Heart right ventricle (tissue), 16 donors: ENCODE measurements at regions of chr9 and their contacts with region 1.

Region 1: DNA sequence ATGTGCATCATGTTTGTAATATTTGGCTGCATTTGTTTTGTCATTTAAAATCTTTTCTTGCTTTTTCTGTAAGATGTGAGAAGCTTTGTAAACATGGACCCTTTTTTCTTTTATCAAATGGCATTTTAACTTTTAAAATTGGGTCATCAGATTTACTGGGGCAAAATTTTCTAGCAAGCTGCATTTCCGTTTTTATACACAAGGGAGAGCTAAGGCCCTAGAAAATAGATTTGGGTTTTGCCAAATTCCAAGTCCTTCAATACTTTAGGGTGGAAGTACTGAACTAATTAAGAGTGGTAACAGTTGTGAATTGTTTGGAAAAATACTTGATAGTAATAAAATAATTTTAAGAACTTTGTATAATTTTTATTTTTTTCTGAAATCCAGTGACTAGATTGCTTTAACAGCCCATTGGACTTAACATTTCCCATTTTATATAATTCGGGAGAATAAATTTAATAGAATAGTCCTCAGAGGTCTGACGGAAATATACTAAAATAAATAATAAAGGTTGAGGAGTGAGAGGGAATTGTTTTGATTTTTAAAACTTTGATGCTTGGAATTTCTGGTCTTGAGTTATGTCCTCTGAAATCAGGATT is 117.4 kb downstream of the SMARCA2 start:
- DNase-seq: no peak
- ATAC-seq: peak in 2 of 8 donors; percentile 26 to 37
- H3K4me3 ChIP-seq: no peak overlapping the region
- H3K27ac ChIP-seq: peak overlapping the region in 3 of 10 donors; percentile 0 to 6 (median 4)
- H3K4me1 ChIP-seq: peaks cover 5 to 63% (median 40%) of the 10 kb centered on the region in 9 donors
- H3K27me3 ChIP-seq: no peaks in the 10 kb centered on the region
- CTCF ChIP-seq: peak; percentile 61 to 86 (median 74)

Region 2: GRCh38 chr9:2181792-2182191 is 49.2 kb after region 1 on chr9:
- intact Hi-C with region 1: loop called in 3 of 10 experiments (anchors 2 to 5 kb)
- DNase-seq: no peak
- ATAC-seq: peak in 2 of 8 donors; percentile 58 to 70
- H3K4me3 ChIP-seq: no peak overlapping the region
- H3K27ac ChIP-seq: no peak overlapping the region
- H3K4me1 ChIP-seq: peaks cover 0 to 11% (median 4%) of the 10 kb centered on the region in 9 donors
- H3K27me3 ChIP-seq: no peaks in the 10 kb centered on the region
- CTCF ChIP-seq: peak in 8 of 9 donors; percentile 10 to 61 (median 50)

Region 3: DNA sequence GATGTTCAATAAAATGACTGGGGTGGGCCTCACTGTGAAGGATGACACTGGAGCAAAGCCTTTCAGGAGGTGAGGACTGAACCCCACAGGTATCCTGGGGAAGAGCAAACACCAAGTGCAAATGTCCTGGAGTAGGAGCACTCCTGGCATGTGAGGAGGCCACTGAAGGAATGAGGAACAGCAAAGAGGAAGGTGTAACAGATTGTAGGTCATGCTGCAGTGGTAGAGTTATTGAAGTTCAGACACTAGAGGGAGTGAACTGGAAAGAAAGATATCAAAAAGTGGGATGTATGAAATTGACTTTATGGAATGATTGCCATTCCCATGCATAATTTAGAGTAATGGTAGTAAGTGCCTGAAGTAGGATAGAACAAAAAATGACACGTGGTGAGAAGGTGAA is 606.5 kb after region 1 on chr9:
- intact Hi-C with region 1: loop called in 1 of 10 experiments (anchors 5 kb)
- DNase-seq: no peak
- ATAC-seq: no peak
- H3K4me3 ChIP-seq: no peak overlapping the region
- H3K27ac ChIP-seq: no peak overlapping the region
- H3K4me1 ChIP-seq: peaks cover 0 to 7% (median 0%) of the 10 kb centered on the region in 9 donors
- H3K27me3 ChIP-seq: no peaks in the 10 kb centered on the region
- CTCF ChIP-seq: peak in 1 of 9 donors; percentile 5

Region 4: DNA sequence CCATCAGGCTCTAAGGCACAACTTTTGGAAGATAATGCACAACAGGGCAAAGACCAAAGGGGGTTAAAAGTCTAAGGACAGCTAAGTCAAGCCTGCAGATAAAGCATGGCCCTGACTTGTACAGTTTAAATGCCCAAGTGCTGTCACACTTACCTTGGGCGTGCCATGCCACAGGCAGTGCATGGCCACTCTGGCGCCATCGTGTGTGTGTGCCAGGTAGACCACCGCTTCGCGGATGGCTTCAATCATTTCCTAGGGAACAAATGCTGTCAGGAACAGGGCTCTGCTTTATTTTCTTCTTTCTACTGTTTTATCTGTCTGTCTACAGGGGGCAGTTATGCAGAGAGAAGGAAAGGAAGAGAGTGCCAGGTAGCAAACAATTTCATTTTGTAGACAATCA is 692.0 kb after region 1 on chr9:
- intact Hi-C with region 1: loop called in 1 of 10 experiments (anchors 10 kb)
- DNase-seq: no peak
- ATAC-seq: peak in 4 of 8 donors; percentile 28 to 64 (median 39)
- H3K4me3 ChIP-seq: no peak overlapping the region
- H3K27ac ChIP-seq: no peak overlapping the region
- H3K4me1 ChIP-seq: no peaks in the 10 kb centered on the region
- H3K27me3 ChIP-seq: no peaks in the 10 kb centered on the region
- CTCF ChIP-seq: peak in 5 of 9 donors; percentile 7 to 35 (median 27)